Motor neuron (in vitro differentiated cells): ENCODE measurements at regions of chr2 and their contacts with region 1.

Region 1: DNA sequence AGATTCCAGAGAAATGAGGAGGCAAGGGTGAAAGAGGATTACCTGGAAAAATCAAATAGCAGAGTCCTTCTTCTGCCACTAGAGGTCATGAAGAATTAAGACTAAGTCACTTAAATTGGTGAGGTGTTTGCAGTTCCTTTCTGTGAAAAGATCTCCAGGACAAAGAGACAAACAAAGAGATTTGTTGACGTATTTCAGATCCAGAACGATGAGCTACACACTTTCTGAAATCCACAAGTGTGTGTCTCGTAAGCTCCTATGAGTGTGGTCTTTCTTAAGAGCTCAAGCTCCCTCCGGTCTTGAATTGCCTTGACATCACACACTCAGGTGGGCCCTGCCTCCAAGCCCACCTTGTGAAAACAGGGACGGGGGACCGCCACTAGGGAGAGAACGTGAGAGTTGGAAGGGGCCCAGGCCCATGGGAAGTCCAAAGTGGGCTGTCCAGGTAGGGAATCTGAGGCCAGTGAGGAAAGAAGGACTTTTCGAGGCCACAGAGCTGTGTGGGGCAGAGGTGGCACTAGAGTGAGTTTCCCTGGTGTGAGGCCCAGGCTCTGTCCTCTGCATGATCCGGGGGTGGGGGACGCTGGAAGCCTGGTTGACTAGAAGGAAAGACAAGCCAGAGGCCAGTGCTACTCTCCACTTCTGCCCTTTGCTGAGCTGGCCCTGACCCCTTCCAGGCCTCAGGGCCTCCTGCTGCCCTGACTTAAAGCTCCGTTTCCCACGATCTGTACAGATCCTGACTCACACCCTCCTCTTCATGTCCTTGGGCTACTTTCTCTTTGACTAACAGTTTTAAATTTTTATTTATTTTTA is 168.1 kb upstream of the NCK2 start:
- ATAC-seq: peak in 5 of 8 experiments; percentile 25 to 77 (median 65)
- H3K4me3 ChIP-seq: no peak overlapping the region
- H3K27ac ChIP-seq: no peak overlapping the region
- H3K4me1 ChIP-seq: peaks cover 0 to 3% of the 10 kb centered on the region in 2 donors

Region 2: GRCh38 chr2:106085181-106085940 is 508.7 kb after region 1 on chr2:
- in situ Hi-C with region 1: loop called in 2 of 9 experiments (anchors 25 kb)
- ATAC-seq: peak in 4 of 8 experiments; percentile 39 to 69 (median 66)
- H3K4me3 ChIP-seq: no peak overlapping the region
- H3K27ac ChIP-seq: no peak overlapping the region
- H3K4me1 ChIP-seq: no peaks in the 10 kb centered on the region